Activated CD8-positive, alpha-beta memory T cell treated with anti-CD3 and anti-CD28 coated beads, Interleukin-2, amount 10 ng/mL, durations not matched to agents 7 days and 5 days (primary cell): ENCODE measurements at regions of chr16 and their contacts with region 1.

Region 1: GRCh38 chr16:67928561-67929364 is 2.9 kb downstream of the CTRL start:
- DNase-seq: peak; percentile 86
- ATAC-seq: peak; percentile 92
- H3K4me3 Mint-ChIP-seq: no peak overlapping the region
- H3K27ac Mint-ChIP-seq: peak overlapping the region; percentile 6
- H3K4me1 Mint-ChIP-seq: no peaks in the 10 kb centered on the region
- H3K27me3 Mint-ChIP-seq: no peaks in the 10 kb centered on the region

Region 2: DNA sequence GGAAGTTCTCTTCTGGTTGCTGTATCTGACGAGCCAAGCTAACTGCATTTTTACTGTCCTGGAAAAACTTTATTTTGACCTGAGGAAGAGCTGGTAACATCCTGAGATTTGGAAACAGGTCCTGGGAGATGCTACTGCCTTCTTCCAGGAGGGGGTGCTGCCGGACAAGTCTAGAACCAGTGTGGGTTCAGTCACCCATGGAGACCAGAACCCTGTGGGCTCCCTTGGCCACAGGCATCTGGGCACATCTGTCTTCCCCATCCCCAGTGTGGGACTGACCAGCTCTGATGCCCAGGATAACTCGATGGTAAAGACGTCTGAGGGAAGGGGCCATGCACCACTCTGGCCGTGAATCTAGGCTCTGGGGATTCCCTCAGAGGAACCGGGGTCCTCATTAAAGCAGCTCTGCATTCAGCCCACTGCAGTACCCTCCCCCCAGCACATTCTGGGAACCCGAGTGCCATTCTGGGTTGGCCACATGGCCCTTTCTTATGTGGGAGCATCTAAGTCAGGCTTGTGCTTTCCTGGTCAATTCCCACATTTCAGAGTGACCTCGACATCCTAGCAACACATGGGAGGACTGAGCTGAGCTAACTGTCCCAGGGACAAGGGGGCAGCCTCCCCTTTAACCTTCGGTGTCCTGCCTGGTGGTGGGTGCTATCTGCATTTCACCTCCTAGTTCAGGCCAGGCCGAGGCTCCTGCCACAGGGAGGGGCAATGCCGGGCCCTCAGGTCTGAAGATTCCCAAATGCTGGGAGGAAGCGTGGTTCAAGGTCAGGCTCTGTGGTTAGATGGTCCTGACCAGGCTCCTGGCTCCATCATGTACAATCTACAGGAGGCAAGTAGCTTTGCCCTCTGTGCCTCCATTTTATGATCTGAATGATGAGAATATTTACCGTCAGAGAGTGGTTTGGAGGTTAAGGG is 255.8 kb before region 1 on chr16:
- CTCF ChIA-PET with region 1: interaction called, 10 read pairs
- DNase-seq: peak; percentile 70
- ATAC-seq: peak; percentile 37
- H3K4me3 Mint-ChIP-seq: no peak overlapping the region
- H3K27ac Mint-ChIP-seq: no peak overlapping the region
- H3K4me1 Mint-ChIP-seq: peaks cover under 1% of the 10 kb centered on the region
- H3K27me3 Mint-ChIP-seq: no peaks in the 10 kb centered on the region

Region 3: GRCh38 chr16:67833418-67834241 is 95.1 kb before region 1 on chr16:
- CTCF ChIA-PET with region 1: interaction called, 11 read pairs
- DNase-seq: peak; percentile 97
- ATAC-seq: peak; percentile 99
- H3K4me3 Mint-ChIP-seq: peak overlapping the region; percentile 83
- H3K27ac Mint-ChIP-seq: peak overlapping the region; percentile 81
- H3K4me1 Mint-ChIP-seq: peaks cover 12% of the 10 kb centered on the region
- H3K27me3 Mint-ChIP-seq: no peaks in the 10 kb centered on the region

Region 4: GRCh38 chr16:67910158-67910557 is 18.6 kb before region 1 on chr16:
- CTCF ChIA-PET with region 1: interaction called, 10 read pairs
- DNase-seq: peak; percentile 73
- ATAC-seq: peak; percentile 95
- H3K4me3 Mint-ChIP-seq: no peak overlapping the region
- H3K27ac Mint-ChIP-seq: peak overlapping the region; percentile 47
- H3K4me1 Mint-ChIP-seq: peaks cover 17% of the 10 kb centered on the region
- H3K27me3 Mint-ChIP-seq: no peaks in the 10 kb centered on the region

Region 5: DNA sequence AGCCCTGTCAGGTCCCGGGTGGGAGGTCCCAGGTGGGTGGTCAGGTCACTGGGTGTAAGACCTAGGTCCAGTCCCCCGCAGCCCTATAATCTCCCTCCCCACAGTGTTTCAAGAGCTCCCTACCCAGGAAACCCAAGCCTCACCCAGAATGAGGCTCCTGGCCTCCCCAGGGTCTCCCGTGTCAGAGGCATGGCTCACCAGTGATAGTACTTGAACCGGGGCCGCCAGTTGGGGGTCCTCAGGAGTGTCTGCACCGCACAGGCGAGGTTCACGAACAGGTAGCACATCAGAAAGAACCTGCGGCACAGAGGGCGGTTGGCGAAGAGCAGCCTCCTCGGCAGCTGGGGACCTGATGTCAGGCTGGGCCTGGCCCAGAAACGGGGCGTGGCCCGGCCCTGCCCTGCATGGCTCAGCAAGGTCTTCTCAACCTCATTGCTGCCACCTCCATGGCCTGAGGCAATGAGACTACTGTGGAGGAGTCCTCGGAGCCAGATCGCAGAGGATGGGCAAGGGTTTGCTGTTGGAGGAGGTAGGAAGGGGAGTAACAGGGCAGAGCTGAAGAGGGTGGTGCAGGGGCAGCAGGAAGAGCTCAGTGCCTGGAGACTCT is 19.2 kb after region 1 on chr16:
- CTCF ChIA-PET with region 1: no interaction called
- DNase-seq: no peak
- ATAC-seq: no peak
- H3K4me3 Mint-ChIP-seq: no peak overlapping the region
- H3K27ac Mint-ChIP-seq: peak overlapping the region; percentile 6
- H3K4me1 Mint-ChIP-seq: peaks cover 4% of the 10 kb centered on the region
- H3K27me3 Mint-ChIP-seq: no peaks in the 10 kb centered on the region